ENCODE measurements at regions of chr3 and their contacts with region 1.

Region 1: DNA sequence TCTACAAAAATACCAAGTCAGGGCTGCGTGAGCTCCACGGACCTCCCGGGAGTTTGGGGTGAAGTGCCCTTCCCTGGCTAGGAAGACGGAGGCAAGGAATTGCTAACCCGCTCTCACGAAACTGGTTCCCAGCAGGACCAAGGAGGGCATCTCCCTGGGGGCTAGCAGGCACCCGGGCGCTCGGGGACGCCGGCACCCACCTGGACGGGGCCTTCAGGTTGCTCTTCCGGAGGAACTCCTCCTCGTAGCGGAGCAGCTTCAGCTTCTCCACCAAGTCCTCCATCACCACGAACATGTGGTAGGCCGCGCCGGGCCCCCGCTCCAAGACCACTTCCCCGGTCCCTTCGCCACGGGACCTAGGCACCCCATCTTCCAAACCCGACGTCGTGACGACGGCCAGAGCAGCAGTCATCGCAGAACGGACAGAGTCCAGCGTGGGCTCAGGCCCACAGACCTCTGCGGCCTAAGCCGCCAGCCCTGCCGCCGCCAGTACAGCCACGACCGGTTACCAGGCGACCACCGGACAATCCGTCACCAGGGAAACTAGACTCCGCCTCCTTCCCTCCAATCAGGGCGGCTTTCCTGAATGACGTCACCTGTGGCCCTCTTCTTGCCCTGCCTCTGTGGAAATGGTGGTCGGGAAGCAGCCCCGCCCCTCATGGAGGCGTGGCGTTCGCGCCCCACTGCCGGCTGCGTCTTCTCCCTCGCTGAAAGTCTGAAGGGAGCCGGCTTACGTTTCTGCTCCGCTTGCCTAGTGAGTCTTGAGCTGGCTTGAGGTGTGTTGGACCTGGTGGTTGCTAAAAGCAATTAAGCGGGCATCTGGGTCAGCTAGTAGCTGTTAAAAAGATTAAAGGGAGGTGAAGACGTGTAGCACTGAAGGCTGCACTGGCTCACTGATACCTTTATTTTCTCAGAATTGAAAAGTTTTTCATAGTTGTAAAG is at the start of gene IFT57:
- DNase-seq: peak; percentile 96
- H3K4me3 Mint-ChIP-seq: peak within 1 kb of the TSS; percentile 96
- H3K27ac Mint-ChIP-seq: peak within 1 kb of the TSS; percentile 96
- H3K4me1 Mint-ChIP-seq: peaks cover 47% of the 10 kb centered on the region
- H3K27me3 Mint-ChIP-seq: no peaks in the 10 kb centered on the region
- total RNA-seq, gene IFT57: 29.4 to 29.6 TPM

Region 2: GRCh38 chr3:107522510-107523288 is 699.5 kb before region 1 on chr3 and contains the start of gene BBX:
- CTCF ChIA-PET with region 1: no interaction called
- POLR2A ChIA-PET with region 1: no interaction called
- intact Hi-C with region 1: loop called (anchors 5 kb)
- DNase-seq: peak; percentile 96
- H3K4me3 Mint-ChIP-seq: peak within 1 kb of the TSS; percentile 94
- H3K27ac Mint-ChIP-seq: peak within 1 kb of the TSS; percentile 95
- H3K4me1 Mint-ChIP-seq: peaks cover 23% of the 10 kb centered on the region
- H3K27me3 Mint-ChIP-seq: no peaks in the 10 kb centered on the region
- total RNA-seq, gene BBX: 39.9 to 40.9 TPM

Region 3: GRCh38 chr3:107643038-107643883 is 578.9 kb before region 1 on chr3:
- CTCF ChIA-PET with region 1: no interaction called
- POLR2A ChIA-PET with region 1: no interaction called
- intact Hi-C with region 1: no loop called
- DNase-seq: no peak
- H3K4me3 Mint-ChIP-seq: no peak overlapping the region
- H3K27ac Mint-ChIP-seq: no peak overlapping the region
- H3K4me1 Mint-ChIP-seq: peaks cover 21% of the 10 kb centered on the region
- H3K27me3 Mint-ChIP-seq: no peaks in the 10 kb centered on the region

Region 4: DNA sequence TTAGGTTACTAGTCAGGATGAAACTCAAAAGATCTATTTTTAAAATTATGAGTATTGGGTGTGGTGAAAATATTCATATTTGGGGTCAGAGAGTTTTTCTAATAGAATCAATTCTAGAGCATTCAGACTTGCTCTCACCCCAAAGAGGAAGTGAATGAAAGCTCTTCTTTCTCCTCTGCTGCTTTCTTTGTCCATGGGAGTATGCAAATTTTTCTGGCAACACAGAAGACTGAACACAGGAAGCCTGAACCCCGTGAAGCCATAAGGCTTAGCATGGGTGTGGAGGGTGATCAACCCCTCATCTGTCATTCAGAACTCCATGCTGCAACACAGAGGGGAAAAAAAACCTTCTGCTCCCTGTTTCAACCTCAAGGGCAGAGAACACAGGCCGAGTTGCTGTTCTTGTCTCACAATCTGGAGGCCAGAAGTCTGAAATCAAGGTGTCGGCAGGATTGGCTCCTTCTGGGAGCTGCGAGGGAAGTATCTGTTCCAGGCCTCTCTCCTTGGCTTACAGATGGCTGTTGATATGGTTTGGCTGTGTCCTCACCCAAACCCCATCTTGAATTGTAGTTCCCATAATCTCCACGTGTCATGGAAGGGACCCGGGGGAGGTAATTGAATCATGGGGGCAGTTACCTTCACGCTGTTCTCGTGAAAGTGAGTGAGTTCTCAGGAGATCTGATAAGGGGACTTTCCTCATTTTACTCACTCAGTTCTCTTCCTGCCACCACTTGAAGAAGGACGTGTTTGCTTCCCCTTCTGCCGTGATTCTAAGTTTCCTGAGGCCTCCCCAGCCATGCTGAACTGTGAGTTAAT is 97.6 kb before region 1 on chr3:
- CTCF ChIA-PET with region 1: no interaction called
- POLR2A ChIA-PET with region 1: interaction called, 4 read pairs
- intact Hi-C with region 1: loop called (anchors 1 kb)
- DNase-seq: peak; percentile 84
- H3K4me3 Mint-ChIP-seq: peak overlapping the region; percentile 91
- H3K27ac Mint-ChIP-seq: peak overlapping the region; percentile 99
- H3K4me1 Mint-ChIP-seq: peaks cover 55% of the 10 kb centered on the region
- H3K27me3 Mint-ChIP-seq: no peaks in the 10 kb centered on the region

Region 5: GRCh38 chr3:108255131-108255530 is 32.9 kb after region 1 on chr3:
- CTCF ChIA-PET with region 1: no interaction called
- POLR2A ChIA-PET with region 1: no interaction called
- intact Hi-C with region 1: no loop called
- DNase-seq: no peak
- H3K4me3 Mint-ChIP-seq: no peak overlapping the region
- H3K27ac Mint-ChIP-seq: no peak overlapping the region
- H3K4me1 Mint-ChIP-seq: no peaks in the 10 kb centered on the region
- H3K27me3 Mint-ChIP-seq: no peaks in the 10 kb centered on the region

Region 6: GRCh38 chr3:108342837-108343478 is 120.8 kb after region 1 on chr3:
- CTCF ChIA-PET with region 1: no interaction called
- POLR2A ChIA-PET with region 1: no interaction called
- intact Hi-C with region 1: loop called (anchors 2 kb)
- DNase-seq: peak; percentile 17
- H3K4me3 Mint-ChIP-seq: no peak overlapping the region
- H3K27ac Mint-ChIP-seq: peak overlapping the region; percentile 58
- H3K4me1 Mint-ChIP-seq: peaks cover 13% of the 10 kb centered on the region
- H3K27me3 Mint-ChIP-seq: peaks cover 3% of the 10 kb centered on the region

Region 7: DNA sequence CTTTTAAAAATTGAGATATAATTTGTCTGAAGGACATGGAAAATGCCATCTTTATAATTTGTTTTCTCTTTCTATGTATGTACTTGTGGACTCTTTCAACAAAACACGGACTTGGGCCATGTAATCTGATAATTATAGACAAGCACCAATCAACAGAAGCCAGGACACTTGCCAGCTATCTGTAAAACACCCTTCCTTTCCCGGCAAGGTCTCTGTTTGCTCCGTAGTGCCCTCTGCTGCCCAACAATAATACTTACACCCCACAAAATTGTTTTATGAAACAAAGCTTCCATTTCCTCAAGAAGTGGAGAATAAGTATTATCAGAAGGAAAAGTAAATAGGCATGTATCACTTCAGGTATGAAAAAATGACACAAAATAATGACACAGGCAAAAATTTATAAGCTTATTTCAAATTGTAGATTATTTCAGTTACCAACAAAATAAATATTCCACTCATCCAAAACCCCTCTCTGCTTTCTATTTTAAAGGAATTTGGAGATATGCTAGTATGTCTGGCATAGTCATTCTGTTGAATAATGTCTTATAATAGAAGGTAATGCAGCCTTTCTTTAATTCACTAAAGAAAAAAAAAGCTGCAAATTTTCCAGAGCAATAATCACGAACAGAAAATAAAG is 255.4 kb after region 1 on chr3:
- CTCF ChIA-PET with region 1: interaction called, 7 read pairs
- POLR2A ChIA-PET with region 1: no interaction called
- intact Hi-C with region 1: loop called (anchors 5 kb)
- DNase-seq: peak; percentile 67
- H3K4me3 Mint-ChIP-seq: no peak overlapping the region
- H3K27ac Mint-ChIP-seq: no peak overlapping the region
- H3K4me1 Mint-ChIP-seq: peaks cover 3% of the 10 kb centered on the region
- H3K27me3 Mint-ChIP-seq: peaks cover 1% of the 10 kb centered on the region

Region 8: DNA sequence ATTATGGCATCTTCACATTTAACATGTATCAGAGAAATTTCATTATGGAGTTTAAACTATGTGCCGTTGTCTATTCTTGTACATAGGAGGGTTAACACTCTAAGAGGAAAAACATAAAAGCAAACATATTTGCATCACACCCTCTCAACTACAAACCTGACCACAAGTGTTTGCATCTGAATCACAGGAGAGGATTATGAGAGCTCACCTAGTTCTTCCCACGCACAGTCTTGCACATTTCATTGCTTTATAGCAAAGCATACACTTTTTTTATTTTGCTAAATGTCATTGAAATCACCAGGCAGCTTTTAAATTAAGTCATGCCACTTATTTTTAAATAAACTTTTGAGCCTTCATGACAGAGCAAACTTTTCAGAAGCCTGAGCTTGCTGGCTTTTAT is 612.9 kb after region 1 on chr3:
- CTCF ChIA-PET with region 1: no interaction called
- POLR2A ChIA-PET with region 1: no interaction called
- intact Hi-C with region 1: loop called (anchors 2 kb)
- DNase-seq: peak; percentile 49
- H3K4me3 Mint-ChIP-seq: peak overlapping the region; percentile 77
- H3K27ac Mint-ChIP-seq: peak overlapping the region; percentile 93
- H3K4me1 Mint-ChIP-seq: peaks cover 79% of the 10 kb centered on the region
- H3K27me3 Mint-ChIP-seq: no peaks in the 10 kb centered on the region

Measured in activated CD4-positive, alpha-beta memory T cell treated with anti-CD3 and anti-CD28 coated beads for 36 hours (primary cell).